IMR-90 (cell line): ENCODE measurements at regions of chr19 and their contacts with region 1.

Region 1: GRCh38 chr19:46830864-46831263 is 19.8 kb downstream of the AP2S1 start:
- DNase-seq: peak; percentile 50
- ATAC-seq: 0 out of 2 replicates have a peak, but pooled peaks have one; percentile 44
- H3K4me3 ChIP-seq: no peak overlapping the region
- H3K27ac ChIP-seq: peak overlapping the region; percentile 72; the same call in 1 of the 2 replicates
- H3K4me1 ChIP-seq: peaks cover 3% of the 10 kb centered on the region; the same call in 1 of the 2 replicates
- H3K27me3 ChIP-seq: no peaks in the 10 kb centered on the region
- CTCF ChIP-seq: no peak
- POLR2A ChIP-seq: no peak
- RAD21 ChIP-seq: no peak

Region 2: DNA sequence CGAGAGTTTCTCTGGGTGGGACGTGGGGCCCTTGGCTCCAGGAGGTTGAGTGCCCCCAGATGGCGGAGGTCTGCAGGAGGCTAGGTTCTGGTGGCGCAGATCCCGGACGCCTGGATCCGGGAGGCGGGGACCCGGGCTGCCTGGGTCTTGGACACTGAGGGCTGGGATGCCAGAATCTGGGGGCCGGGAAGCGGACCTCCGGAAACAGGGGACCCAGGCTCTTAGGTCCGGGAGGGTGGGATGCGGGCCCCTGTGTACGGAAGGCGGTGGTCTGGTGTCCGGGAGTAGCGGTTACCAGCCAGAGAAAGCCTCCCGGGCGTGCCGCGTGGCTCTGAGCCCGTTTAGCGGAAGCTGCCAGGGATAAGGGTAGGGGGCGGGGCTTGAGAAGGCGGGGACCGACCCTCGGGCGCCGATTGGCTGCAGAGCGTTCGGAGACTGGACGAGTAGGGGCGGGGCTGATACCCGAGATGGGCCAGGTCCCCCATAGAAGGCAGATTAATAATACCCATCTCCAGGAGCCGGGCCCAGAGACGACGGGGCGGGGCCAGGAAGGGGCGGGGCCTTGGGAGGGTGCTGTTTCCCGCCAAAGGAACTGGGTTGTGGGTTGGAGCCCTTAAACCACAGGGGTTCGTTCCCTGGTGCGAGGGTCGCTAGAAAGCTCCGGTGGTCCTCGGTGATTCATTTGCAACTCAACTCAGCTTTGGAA is 42.4 kb before region 1 on chr19 and contains the start of gene SLC1A5:
- CTCF ChIA-PET with region 1: interaction called, 4 read pairs
- POLR2A ChIA-PET with region 1: interaction called, 5 read pairs
- dilution Hi-C with region 1: no loop called
- in situ Hi-C with region 1: no loop called
- intact Hi-C with region 1: loop called (anchors 1 kb)
- DNase-seq: peak; percentile 96
- ATAC-seq: peak; percentile 76
- H3K4me3 ChIP-seq: peak within 1 kb of the TSS; percentile 97
- H3K27ac ChIP-seq: peak within 1 kb of the TSS; percentile 84
- H3K4me1 ChIP-seq: peaks cover 14% of the 10 kb centered on the region
- H3K27me3 ChIP-seq: no peaks in the 10 kb centered on the region
- CTCF ChIP-seq: no peak
- POLR2A ChIP-seq: peak; percentile 100
- RAD21 ChIP-seq: no peak
- total RNA-seq, gene SLC1A5: 105 and 142 TPM in 2 replicates

Region 3: GRCh38 chr19:46919324-46919723 is 88.5 kb after region 1 on chr19:
- CTCF ChIA-PET with region 1: no interaction called
- POLR2A ChIA-PET with region 1: no interaction called
- dilution Hi-C with region 1: no loop called
- in situ Hi-C with region 1: no loop called
- intact Hi-C with region 1: no loop called
- DNase-seq: peak; percentile 75
- ATAC-seq: peak; percentile 71
- H3K4me3 ChIP-seq: no peak overlapping the region
- H3K27ac ChIP-seq: no peak overlapping the region
- H3K4me1 ChIP-seq: peaks cover 7% of the 10 kb centered on the region
- H3K27me3 ChIP-seq: no peaks in the 10 kb centered on the region
- CTCF ChIP-seq: no peak
- POLR2A ChIP-seq: no peak
- RAD21 ChIP-seq: no peak

Region 4: DNA sequence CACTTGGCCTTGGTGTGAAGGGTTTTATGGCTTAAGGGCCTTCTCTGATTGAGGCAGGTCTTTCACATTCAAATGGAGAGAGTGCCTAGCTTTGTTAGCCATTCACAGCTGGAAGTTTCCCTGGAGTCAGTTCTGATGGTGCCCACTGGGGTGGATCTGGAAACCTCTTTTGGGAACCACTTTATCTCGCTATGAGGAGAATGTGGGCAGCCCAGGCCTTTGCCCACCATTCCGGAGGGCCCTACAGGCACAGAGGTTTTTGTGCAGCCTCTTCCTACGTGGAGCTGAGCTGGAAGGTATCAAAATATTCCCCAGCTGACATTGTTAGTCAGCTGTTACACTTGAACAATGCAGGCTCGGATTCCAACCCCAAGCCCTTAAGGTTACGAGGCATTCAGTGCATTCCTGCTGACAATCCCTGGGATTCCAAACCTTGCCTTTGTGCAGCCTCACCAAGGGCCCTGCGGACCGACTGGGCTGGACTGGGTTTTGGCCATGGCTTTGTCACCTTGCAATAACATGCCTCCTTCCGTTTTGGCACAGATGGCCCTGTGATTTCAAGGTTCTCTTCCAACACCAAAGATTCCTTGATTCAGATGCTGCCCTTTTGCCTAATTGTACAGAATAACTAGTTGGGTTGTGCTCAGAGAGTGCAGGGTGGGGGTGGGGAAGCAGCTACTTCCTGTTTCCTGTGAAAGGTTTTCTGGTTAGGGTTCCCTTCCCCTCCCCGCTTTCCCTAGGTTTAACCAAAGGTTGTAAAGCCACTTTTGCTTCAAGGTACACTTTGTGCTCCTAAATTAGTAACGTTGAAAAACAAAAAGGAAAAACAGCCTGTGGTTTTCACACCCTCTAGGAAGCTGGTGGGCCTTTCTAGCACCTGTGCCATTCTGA is 326.8 kb after region 1 on chr19:
- CTCF ChIA-PET with region 1: no interaction called
- POLR2A ChIA-PET with region 1: no interaction called
- dilution Hi-C with region 1: no loop called
- in situ Hi-C with region 1: no loop called
- intact Hi-C with region 1: no loop called
- DNase-seq: peak; percentile 72
- ATAC-seq: peak; percentile 69
- H3K4me3 ChIP-seq: no peak overlapping the region
- H3K27ac ChIP-seq: peak overlapping the region; percentile 78
- H3K4me1 ChIP-seq: peaks cover 27% of the 10 kb centered on the region
- H3K27me3 ChIP-seq: no peaks in the 10 kb centered on the region
- CTCF ChIP-seq: no peak
- POLR2A ChIP-seq: no peak
- RAD21 ChIP-seq: no peak